ENCODE measurements at regions of chr2 and their contacts with region 1.

Region 1: GRCh38 chr2:231674587-231675338 is 33.6 kb upstream of the PTMA start:
- DNase-seq: peak; percentile 55
- H3K4me3 Mint-ChIP-seq: peak overlapping the region; percentile 15
- H3K27ac Mint-ChIP-seq: peak overlapping the region; percentile 26
- H3K4me1 Mint-ChIP-seq: peaks cover 22% of the 10 kb centered on the region
- H3K27me3 Mint-ChIP-seq: no peaks in the 10 kb centered on the region

Region 2: GRCh38 chr2:231648587-231649174 is 26.1 kb before region 1 on chr2:
- intact Hi-C with region 1: loop called (anchors 1 kb)
- DNase-seq: peak; percentile 54
- H3K4me3 Mint-ChIP-seq: no peak overlapping the region
- H3K27ac Mint-ChIP-seq: no peak overlapping the region
- H3K4me1 Mint-ChIP-seq: peaks cover 29% of the 10 kb centered on the region
- H3K27me3 Mint-ChIP-seq: no peaks in the 10 kb centered on the region

Region 3: DNA sequence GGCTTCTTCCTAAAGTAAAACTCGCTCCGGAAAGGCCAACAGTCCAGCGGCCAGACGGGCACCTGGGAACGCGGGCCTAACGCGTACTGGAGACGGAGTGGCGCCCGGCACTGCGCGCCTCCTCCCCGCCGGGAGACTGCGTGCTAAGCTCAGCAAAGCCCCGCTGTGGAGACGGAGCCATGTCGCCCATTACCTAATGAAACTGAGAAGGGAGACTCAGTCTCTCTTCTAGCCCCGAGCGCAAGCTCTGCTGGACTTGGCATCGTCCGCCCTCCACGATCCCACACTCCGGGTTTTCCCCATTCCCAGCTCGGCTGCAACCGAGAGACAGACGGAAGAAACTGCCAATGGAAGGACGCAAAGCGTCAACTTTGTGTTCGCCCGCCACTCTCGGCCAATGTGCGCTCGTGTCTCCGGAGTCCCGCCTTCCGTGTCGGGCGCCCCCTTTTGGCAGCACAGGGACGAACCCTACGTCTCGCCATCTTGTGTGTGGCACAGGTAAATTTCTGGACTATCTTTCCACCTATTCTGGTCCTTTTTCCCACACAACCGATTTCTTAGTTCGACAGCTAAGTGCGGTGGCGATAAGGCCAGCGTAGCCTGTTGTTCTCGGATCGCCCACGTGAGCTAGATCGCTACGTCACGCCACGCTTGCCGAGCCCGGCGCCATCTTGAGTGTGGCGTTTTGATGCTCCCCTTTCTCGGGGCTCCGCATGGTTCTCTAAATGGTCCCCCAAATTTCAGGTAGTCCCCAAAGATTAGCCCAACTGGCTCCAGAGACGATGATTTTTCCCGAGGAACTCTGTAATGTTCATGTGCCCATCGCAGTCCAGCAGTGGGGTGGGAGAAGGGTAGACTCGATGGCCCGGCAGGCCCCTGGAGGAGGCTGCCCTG is 32.2 kb after region 1 on chr2:
- intact Hi-C with region 1: loop called (anchors 1 kb)
- DNase-seq: peak; percentile 96
- H3K4me3 Mint-ChIP-seq: peak overlapping the region; percentile 99
- H3K27ac Mint-ChIP-seq: peak overlapping the region; percentile 100
- H3K4me1 Mint-ChIP-seq: peaks cover 13% of the 10 kb centered on the region
- H3K27me3 Mint-ChIP-seq: peaks cover 3% of the 10 kb centered on the region

Region 4: GRCh38 chr2:231713730-231714430 is 39.1 kb after region 1 on chr2:
- intact Hi-C with region 1: loop called (anchors 1 kb)
- DNase-seq: peak; percentile 78
- H3K4me3 Mint-ChIP-seq: peak overlapping the region; percentile 75
- H3K27ac Mint-ChIP-seq: peak overlapping the region; percentile 93
- H3K4me1 Mint-ChIP-seq: peaks cover 26% of the 10 kb centered on the region
- H3K27me3 Mint-ChIP-seq: no peaks in the 10 kb centered on the region

Region 5: DNA sequence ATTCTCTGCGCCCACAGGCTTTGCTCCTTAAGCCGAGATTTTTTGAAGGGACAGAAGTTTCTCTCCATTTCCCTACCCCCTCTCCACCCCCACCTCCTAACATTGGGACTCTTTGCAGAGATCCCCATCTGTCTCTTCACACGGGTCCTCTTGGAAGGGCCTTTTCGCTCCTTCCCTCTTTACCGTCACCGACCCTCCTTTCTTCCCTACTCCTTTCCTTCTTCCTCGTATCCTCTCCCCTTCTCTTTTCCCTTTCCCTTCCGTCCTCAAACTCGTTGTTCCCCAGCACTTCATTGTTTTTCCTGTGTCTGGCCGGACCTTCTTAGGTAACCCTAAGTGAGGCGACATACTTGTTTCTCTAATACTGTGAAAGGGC is 112.1 kb after region 1 on chr2:
- intact Hi-C with region 1: no loop called
- DNase-seq: no peak
- H3K4me3 Mint-ChIP-seq: peak overlapping the region; percentile 94
- H3K27ac Mint-ChIP-seq: peak overlapping the region; percentile 88
- H3K4me1 Mint-ChIP-seq: peaks cover 44% of the 10 kb centered on the region
- H3K27me3 Mint-ChIP-seq: no peaks in the 10 kb centered on the region

Measured in activated T-helper 1 cell treated with anti-CD3 and anti-CD28 coated beads, Interleukin-12 subunit alpha, Interleukin-12 subunit beta, Interleukin-2, Interleukin-4 antibody, amounts not matched to agents 30 ng/mL and 10 ng/mL and 1 ng/mL, durations not matched to agents 14 hours and 24 hours and 36 hours (primary cell).